HEK293 (cell line): ENCODE measurements at regions of chr4 and their contacts with region 1.

Region 1: DNA sequence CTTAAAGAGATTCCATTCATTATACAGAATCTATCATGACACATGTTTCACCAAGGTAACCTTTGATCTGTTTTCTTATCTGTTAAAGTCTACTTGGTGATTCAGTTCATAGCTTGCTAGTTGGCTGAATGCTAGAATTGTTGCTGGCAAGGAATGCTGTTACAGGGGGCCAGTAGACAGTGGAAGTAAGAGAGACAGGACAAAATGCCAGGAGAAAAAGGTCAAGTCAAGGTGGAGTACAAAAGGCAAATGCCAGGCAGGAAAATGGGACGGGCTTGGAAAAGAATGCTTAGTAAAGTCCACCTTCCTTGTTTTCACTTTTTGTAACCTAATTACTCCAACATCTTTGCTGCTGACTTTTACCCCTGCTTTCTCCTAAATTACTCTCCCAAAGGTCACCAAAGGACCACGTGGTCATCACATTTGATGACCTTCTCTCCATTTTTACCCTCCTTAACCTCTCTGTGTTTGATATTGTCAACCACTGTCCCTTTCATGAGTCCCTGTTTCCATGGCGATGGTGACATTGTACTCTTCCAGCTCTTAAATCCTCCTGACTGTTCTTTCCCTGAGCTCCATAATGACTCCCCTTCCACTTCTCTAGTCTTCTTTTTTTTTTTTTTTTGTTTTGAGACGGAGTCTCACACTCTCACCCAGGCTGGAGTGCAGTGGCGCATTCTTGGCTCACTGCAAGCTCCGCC is 24.5 kb upstream of the TAPT1 start:
- H3K4me3 ChIP-seq: no peak overlapping the region
- H3K27ac ChIP-seq: no peak overlapping the region
- H3K4me1 ChIP-seq: no peaks in the 10 kb centered on the region
- CTCF ChIP-seq: no peak

Region 2: DNA sequence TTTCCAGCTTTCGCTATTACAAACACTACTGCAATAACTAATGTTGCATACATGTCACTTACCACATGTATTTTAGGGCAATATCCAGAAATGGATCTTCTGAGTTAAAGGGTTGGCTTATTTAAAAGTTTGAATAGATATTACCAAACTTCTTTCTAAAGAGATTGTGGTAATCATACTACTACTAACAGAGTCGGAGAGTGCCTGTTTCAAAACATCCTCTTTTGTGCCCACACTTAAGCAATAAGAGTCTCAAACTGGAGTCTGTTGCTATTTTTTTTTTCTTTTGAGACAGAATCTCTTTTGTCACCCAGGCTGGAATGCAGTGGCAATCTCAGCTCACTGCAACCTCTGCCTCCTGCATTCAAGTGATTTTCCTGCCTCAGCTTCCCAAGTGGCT is 348.1 kb before region 1 on chr4:
- CTCF ChIA-PET with region 1: no interaction called
- POLR2A ChIA-PET with region 1: interaction called, 10 read pairs
- H3K4me3 ChIP-seq: no peak overlapping the region
- H3K27ac ChIP-seq: no peak overlapping the region
- H3K4me1 ChIP-seq: no peaks in the 10 kb centered on the region
- CTCF ChIP-seq: no peak